GM12878 (cell line): ENCODE measurements at regions of chr18 and their contacts with region 1.

Region 1: DNA sequence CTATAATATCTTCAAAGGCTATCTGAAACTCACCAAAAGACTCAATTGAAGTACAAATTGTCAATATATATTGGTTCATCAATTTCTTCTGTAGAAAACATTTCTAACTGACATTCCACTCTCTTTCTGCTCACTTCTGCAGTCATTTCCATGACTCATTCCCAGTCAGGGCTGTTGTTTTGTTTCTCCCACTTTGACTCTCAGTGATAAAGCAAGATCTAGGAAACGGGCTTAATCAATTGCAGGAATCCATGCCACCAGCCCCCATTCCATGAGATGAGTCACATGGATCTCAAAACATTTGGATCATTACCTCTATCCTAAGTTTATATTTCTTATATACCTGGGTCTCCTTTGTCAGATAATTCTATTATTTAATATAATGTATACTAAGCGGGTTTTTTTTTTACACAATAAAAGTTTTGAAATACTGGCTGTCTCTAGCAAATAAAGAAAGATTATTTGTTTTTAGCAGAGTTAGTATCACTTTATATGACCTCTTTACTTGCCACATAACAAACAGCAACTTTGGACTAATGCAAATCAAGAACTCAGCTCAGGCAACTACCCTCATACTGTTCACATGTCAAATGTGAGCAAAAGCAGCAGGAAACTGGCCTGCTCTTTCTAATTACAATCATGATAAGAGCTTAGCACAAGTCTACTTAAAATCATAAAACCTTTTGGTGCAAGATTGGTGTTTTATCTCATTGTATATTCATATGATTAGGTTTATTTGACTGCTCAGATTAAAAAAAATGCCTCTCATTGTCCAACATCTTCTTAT is 251.1 kb upstream of the PIK3C3 start:
- DNase-seq: no peak
- ATAC-seq: no peak
- H3K4me3 ChIP-seq: no peak overlapping the region
- H3K27ac ChIP-seq: no peak overlapping the region
- H3K4me1 ChIP-seq: no peaks in the 10 kb centered on the region
- H3K27me3 ChIP-seq: no peaks in the 10 kb centered on the region
- CTCF ChIP-seq: no peak
- EP300 ChIP-seq: no peak
- POLR2A ChIP-seq: no peak
- RAD21 ChIP-seq: no peak

Region 2: GRCh38 chr18:41645589-41646360 is 58.2 kb before region 1 on chr18:
- CTCF ChIA-PET with region 1: no interaction called
- POLR2A ChIA-PET with region 1: no interaction called
- RAD21 ChIA-PET with region 1: no interaction called
- SMC1A ChIA-PET with region 1: no interaction called
- in situ Hi-C with region 1: loop called (anchors 10 kb)
- intact Hi-C with region 1: no loop called
- DNase-seq: no peak
- ATAC-seq: peak; percentile 46
- H3K4me3 ChIP-seq: no peak overlapping the region
- H3K27ac ChIP-seq: no peak overlapping the region
- H3K4me1 ChIP-seq: no peaks in the 10 kb centered on the region
- H3K27me3 ChIP-seq: no peaks in the 10 kb centered on the region
- CTCF ChIP-seq: no peak
- EP300 ChIP-seq: no peak
- POLR2A ChIP-seq: no peak
- RAD21 ChIP-seq: no peak